ENCODE measurements at regions of chr6 and their contacts with region 1.

Region 1: DNA sequence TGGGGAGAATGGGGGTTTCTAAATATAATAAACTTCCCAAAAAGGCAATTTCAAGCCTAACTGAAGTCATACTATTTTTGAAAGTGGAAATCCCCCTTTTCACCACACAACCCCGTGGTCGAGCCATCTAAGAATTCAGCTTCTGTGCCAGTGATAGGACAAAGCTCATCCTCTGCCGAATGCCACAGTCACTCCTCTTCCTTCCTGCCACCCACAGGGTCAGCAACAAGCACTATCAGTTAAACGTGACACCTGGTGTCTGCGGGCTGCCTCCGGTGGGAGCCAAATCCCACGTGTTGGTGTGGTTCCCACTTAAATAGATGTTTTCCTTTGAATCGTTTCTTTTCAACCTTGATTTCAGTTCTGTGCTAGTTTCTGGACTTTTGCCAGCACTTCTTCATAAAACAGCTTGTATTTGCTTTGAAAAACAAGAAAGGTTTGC is 60.7 kb downstream of the TNFAIP3 start:
- DNase-seq: peak; percentile 90
- H3K4me3 Mint-ChIP-seq: peak overlapping the region; percentile 66
- H3K27ac Mint-ChIP-seq: peak overlapping the region; percentile 95
- H3K4me1 Mint-ChIP-seq: peaks cover 63% of the 10 kb centered on the region
- H3K27me3 Mint-ChIP-seq: no peaks in the 10 kb centered on the region

Region 2: GRCh38 chr6:137849181-137849980 is 78.4 kb before region 1 on chr6:
- CTCF ChIA-PET with region 1: no interaction called
- intact Hi-C with region 1: no loop called
- DNase-seq: peak; percentile 72
- H3K4me3 Mint-ChIP-seq: no peak overlapping the region
- H3K27ac Mint-ChIP-seq: peak overlapping the region; percentile 2
- H3K4me1 Mint-ChIP-seq: peaks cover 35% of the 10 kb centered on the region
- H3K27me3 Mint-ChIP-seq: no peaks in the 10 kb centered on the region

Region 3: GRCh38 chr6:137866914-137867684 is 60.7 kb before region 1 on chr6 and contains the start of gene TNFAIP3:
- CTCF ChIA-PET with region 1: interaction called, 22 read pairs
- intact Hi-C with region 1: no loop called
- DNase-seq: peak; percentile 97
- H3K4me3 Mint-ChIP-seq: peak within 1 kb of the TSS; percentile 89
- H3K27ac Mint-ChIP-seq: peak within 1 kb of the TSS; percentile 99
- H3K4me1 Mint-ChIP-seq: peaks cover 32% of the 10 kb centered on the region
- H3K27me3 Mint-ChIP-seq: no peaks in the 10 kb centered on the region
- total RNA-seq, gene TNFAIP3: 289 to 294 TPM

Region 4: GRCh38 chr6:137878486-137879285 is 49.1 kb before region 1 on chr6:
- CTCF ChIA-PET with region 1: interaction called, 4 read pairs
- intact Hi-C with region 1: loop called (anchors 1 kb)
- DNase-seq: no peak
- H3K4me3 Mint-ChIP-seq: peak overlapping the region; percentile 65
- H3K27ac Mint-ChIP-seq: peak overlapping the region; percentile 99
- H3K4me1 Mint-ChIP-seq: peaks cover 82% of the 10 kb centered on the region
- H3K27me3 Mint-ChIP-seq: no peaks in the 10 kb centered on the region

Region 5: GRCh38 chr6:137910424-137910834 is 17.4 kb before region 1 on chr6:
- CTCF ChIA-PET with region 1: interaction called, 5 read pairs
- intact Hi-C with region 1: loop called (anchors 1 kb)
- DNase-seq: no peak
- H3K4me3 Mint-ChIP-seq: no peak overlapping the region
- H3K27ac Mint-ChIP-seq: no peak overlapping the region
- H3K4me1 Mint-ChIP-seq: peaks cover 57% of the 10 kb centered on the region
- H3K27me3 Mint-ChIP-seq: no peaks in the 10 kb centered on the region

Region 6: DNA sequence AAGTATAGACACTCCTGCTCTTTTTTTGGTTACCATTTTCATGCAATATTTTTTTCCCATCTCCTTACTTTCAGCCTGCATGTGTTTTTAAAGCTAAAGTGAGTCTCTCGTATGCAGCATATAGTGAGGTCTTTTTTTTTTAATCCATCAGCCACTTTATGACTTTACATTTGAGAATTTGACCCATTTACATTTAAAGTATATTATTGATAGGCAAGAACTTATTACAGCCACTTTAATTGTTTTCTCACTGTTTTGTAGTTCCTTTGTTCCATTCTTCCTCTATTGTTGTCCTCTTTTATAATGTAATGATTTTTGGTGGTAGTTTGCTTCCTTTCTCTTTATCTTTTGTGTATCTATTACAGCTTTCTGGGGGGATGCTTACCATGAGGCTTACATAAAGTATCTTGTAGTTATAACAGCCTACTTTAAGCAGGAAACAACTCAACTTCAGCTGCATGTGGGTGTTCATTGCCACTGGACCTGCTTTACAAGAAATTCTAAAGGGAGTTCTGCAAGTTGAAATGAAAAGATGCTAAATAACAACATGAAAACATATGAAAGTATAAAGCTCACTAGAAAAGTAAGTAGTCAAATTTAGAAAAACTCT is 11.1 kb after region 1 on chr6:
- CTCF ChIA-PET with region 1: interaction called, 27 read pairs
- intact Hi-C with region 1: loop called (anchors 1 kb)
- DNase-seq: no peak
- H3K4me3 Mint-ChIP-seq: no peak overlapping the region
- H3K27ac Mint-ChIP-seq: peak overlapping the region; percentile 80
- H3K4me1 Mint-ChIP-seq: peaks cover 43% of the 10 kb centered on the region
- H3K27me3 Mint-ChIP-seq: no peaks in the 10 kb centered on the region

Measured in activated naive CD4-positive, alpha-beta T cell treated with anti-CD3 and anti-CD28 coated beads for 36 hours (primary cell).